MCF 10A (cell line): ENCODE measurements at regions of chr15 and their contacts with region 1.

Region 1: DNA sequence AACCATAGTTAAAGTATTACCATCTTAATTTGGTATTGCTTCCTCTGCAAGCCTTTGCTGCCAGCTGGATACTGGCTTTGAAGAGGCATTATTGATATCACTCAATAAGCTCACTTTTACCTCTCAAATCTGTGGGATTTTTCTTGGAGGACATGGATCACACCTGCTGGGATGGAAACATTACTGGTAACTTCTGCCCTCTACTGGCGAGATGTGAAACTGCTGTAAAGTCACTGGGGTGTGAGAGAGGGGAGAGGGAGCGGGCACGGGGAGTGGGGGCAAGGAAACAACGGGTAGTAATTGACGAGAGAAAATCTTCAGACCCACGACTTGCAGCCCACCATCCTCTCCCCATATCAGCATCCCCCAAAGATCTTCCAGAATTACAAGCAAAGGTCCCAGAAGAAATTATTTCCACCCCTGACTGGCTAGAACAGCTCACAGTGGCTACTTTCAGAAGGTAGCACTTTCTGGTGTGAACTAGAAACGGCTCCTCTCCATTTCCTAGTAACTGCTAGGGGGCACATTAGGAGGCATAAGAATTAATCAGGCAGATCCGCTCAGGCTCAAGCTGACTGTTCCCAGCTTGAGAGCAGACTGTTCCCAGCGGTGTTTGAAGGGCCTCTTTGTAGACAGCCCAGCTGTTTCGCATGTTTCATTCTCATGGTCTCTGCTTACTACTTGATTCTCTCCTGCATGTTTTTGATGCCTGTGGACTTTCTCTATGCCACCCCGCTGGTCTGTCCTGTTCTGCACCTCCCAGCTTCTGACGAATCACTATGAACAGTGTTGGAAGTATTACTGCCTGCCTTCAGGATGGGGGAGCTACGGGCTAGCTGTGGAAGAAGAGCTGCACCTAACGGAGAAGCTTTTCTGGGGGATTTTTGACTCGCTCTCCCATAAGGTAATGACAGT is 230.4 kb upstream of the CHRM5 start:
- DNase-seq: peak; percentile 61
- H3K4me3 Mint-ChIP-seq: no peak overlapping the region
- H3K27ac Mint-ChIP-seq: no peak overlapping the region
- H3K4me1 Mint-ChIP-seq: no peaks in the 10 kb centered on the region
- H3K27me3 Mint-ChIP-seq: no peaks in the 10 kb centered on the region
- CTCF ChIP-seq: peak; percentile 73

Region 2: DNA sequence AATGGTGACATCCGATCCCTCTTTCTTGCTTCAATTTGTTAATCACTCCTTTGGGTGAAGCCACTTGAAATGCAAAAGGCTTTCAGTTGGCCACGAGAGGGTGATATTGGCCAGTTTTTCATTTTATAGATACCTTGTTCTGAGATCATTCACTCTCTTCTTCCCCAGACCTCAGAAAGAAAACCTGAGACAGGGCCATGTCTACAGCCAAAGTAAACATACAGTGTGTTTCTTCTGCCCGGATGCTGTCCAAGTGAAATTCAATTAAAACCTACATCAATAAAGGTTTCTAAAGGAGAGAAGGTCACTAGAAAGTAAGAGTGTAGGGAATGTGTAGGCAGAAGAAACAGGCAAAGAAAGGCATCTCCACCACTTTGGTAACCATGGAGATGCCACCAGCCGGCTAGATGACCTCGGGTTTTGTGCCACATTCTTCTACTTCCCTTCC is 503.9 kb before region 1 on chr15:
- CTCF ChIA-PET with region 1: interaction called, 54 read pairs
- POLR2A ChIA-PET with region 1: no interaction called
- intact Hi-C with region 1: no loop called
- DNase-seq: peak; percentile 73
- H3K4me3 Mint-ChIP-seq: no peak overlapping the region
- H3K27ac Mint-ChIP-seq: no peak overlapping the region
- H3K4me1 Mint-ChIP-seq: no peaks in the 10 kb centered on the region
- H3K27me3 Mint-ChIP-seq: no peaks in the 10 kb centered on the region
- CTCF ChIP-seq: peak; percentile 63

Region 3: DNA sequence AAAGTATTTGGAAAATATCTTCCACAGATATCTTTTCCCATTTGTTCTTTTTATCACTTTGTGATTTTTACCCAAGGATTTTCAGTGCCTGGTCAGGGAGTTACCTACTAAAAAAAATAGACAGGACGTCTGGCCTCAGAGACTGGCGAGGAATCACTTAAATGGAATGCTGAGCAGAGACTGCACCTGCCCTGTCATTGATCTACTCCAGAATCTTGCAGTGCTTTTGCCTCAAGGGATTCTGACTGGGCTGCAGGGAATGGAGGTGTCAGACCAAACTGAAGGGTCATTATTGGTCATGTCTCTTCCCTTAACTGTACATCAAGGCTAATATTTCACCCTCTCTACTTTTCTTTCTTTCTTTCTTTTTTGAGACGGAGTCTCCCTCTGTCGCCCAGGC is 439.3 kb before region 1 on chr15:
- CTCF ChIA-PET with region 1: interaction called, 48 read pairs
- POLR2A ChIA-PET with region 1: no interaction called
- intact Hi-C with region 1: no loop called
- DNase-seq: peak; percentile 14
- H3K4me3 Mint-ChIP-seq: no peak overlapping the region
- H3K27ac Mint-ChIP-seq: no peak overlapping the region
- H3K4me1 Mint-ChIP-seq: peaks cover 18% of the 10 kb centered on the region
- H3K27me3 Mint-ChIP-seq: no peaks in the 10 kb centered on the region
- CTCF ChIP-seq: no peak

Region 4: DNA sequence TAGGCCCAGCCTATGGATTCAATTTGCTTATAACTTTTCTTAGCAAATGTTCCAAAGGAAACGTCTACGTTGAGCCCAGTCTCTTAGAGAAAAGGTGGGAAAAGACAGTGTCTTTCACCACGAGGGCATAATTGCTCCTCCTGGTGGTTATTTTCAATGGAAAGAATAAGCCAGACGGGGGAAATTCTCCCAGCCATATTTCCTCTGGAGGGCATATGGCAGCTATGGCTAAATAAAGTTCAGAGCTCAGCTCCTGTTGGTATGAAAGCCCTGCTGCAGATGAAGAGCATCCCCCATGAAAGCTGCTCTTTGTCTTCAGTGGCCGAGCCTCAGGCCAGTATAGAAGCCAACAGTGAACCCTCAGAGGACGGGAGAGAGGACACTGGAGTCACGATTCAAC is 129.2 kb before region 1 on chr15:
- CTCF ChIA-PET with region 1: no interaction called
- POLR2A ChIA-PET with region 1: no interaction called
- intact Hi-C with region 1: no loop called
- DNase-seq: peak; percentile 30
- H3K4me3 Mint-ChIP-seq: no peak overlapping the region
- H3K27ac Mint-ChIP-seq: no peak overlapping the region
- H3K4me1 Mint-ChIP-seq: no peaks in the 10 kb centered on the region
- H3K27me3 Mint-ChIP-seq: peaks cover 13% of the 10 kb centered on the region
- CTCF ChIP-seq: peak; percentile 21

Region 5: DNA sequence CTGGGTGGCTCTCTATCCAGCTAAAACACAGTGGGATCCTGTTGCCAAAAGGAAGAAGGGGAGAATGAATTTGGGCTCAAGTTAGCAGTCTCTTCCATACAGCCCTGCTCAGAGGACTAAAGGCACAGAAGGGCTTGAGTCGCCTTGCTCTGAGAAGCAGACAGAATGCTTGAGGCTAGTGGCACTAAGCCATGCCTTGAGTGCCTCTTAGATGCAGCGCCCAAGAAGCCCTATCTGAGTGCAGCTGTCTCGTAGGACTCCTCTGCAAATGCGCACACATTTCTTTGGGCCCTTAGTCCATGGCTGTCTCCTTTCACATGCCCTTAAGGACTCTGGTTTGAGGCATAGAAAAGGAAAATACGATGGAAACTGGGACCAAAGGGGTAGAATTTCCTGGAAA is 19.0 kb after region 1 on chr15:
- CTCF ChIA-PET with region 1: interaction called, 66 read pairs
- POLR2A ChIA-PET with region 1: no interaction called
- intact Hi-C with region 1: no loop called
- DNase-seq: no peak
- H3K4me3 Mint-ChIP-seq: no peak overlapping the region
- H3K27ac Mint-ChIP-seq: no peak overlapping the region
- H3K4me1 Mint-ChIP-seq: no peaks in the 10 kb centered on the region
- H3K27me3 Mint-ChIP-seq: peaks cover 25% of the 10 kb centered on the region
- CTCF ChIP-seq: no peak

Region 6: GRCh38 chr15:33963831-33964664 is 226.1 kb after region 1 on chr15:
- CTCF ChIA-PET with region 1: interaction called, 75 read pairs
- POLR2A ChIA-PET with region 1: no interaction called
- intact Hi-C with region 1: loop called (anchors 1 kb)
- DNase-seq: peak; percentile 48
- H3K4me3 Mint-ChIP-seq: no peak overlapping the region
- H3K27ac Mint-ChIP-seq: no peak overlapping the region
- H3K4me1 Mint-ChIP-seq: no peaks in the 10 kb centered on the region
- H3K27me3 Mint-ChIP-seq: no peaks in the 10 kb centered on the region
- CTCF ChIP-seq: peak; percentile 73

Region 7: DNA sequence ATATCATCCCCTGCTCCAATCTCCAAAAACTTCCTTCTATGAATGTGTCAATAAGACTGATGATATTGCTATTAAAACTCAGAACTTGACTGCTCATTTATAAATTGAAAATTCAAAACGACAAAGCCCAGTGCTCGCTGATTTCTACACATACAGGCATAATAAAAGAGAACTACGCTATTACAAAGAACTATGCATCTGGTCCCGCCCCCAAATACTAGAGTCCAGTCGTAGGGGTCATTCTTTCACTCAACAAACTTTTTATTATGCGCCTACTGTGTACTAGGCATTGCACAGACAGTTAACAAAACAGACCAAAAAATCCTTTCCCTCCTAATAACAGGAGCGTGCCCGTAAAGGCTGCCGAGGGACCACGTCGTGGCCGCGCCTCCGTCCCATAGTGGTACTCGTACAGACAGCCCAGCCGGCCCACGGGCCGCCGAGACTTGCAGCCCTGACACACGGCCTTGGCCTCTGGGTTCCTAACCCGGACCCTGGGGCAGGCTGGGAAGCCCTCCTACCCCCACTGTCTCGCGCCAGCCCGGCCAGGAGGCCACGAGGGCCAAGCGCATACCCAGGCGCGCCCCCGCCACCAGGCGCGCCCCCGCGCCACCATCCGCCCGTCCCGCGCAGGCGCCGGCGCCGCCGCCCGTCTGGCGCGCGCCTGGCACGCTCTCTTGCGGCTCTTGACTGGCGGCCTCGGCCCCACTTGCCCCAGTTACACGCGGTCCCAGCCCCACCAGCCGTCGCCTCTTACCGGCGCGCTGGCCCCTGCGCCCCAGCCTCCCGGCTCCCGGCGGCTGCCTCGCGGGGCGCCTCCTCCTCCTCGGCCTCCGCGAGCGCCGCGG is 300.3 kb after region 1 on chr15:
- CTCF ChIA-PET with region 1: no interaction called
- POLR2A ChIA-PET with region 1: interaction called, 7 read pairs
- intact Hi-C with region 1: loop called (anchors 5 kb)
- DNase-seq: peak; percentile 69
- H3K4me3 Mint-ChIP-seq: peak overlapping the region; percentile 79
- H3K27ac Mint-ChIP-seq: peak overlapping the region; percentile 61
- H3K4me1 Mint-ChIP-seq: peaks cover 10% of the 10 kb centered on the region
- H3K27me3 Mint-ChIP-seq: no peaks in the 10 kb centered on the region
- CTCF ChIP-seq: no peak

Region 8: DNA sequence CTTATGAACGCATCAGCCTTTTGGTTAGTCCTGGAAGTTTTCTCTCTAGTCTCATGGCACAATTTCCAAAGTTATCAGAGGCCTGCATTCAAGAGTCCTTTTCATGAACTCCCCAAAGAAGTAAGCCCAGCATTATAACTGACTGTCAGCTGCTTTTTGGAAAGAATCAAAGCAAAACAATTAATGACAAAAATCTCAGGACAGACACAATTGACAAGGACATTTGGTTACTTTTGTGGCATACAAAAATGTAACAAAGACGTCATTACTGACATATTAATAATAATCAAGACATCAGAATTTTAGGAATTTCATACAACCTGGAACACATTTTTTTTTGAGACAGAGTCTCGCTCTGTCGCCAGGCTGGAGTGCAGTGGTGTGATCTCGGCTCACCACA is 450.8 kb after region 1 on chr15:
- CTCF ChIA-PET with region 1: no interaction called
- POLR2A ChIA-PET with region 1: no interaction called
- intact Hi-C with region 1: no loop called
- DNase-seq: no peak
- H3K4me3 Mint-ChIP-seq: no peak overlapping the region
- H3K27ac Mint-ChIP-seq: no peak overlapping the region
- H3K4me1 Mint-ChIP-seq: peaks cover 4% of the 10 kb centered on the region
- H3K27me3 Mint-ChIP-seq: no peaks in the 10 kb centered on the region
- CTCF ChIP-seq: no peak